ENCODE measurements at regions of chr4 and their contacts with region 1.

Region 1: GRCh38 chr4:75673027-75673958 is at the start of gene G3BP2:
- DNase-seq: peak; percentile 97
- H3K4me3 ChIP-seq: peak within 1 kb of the TSS; percentile 90
- H3K27ac ChIP-seq: peak within 1 kb of the TSS; percentile 77 to 84
- H3K4me1 ChIP-seq: peaks cover 10% of the 10 kb centered on the region
- H3K27me3 ChIP-seq: no peaks in the 10 kb centered on the region
- CTCF ChIP-seq: peak in 1 of 3 donors; percentile 10
- EP300 ChIP-seq: no peak
- POLR2A ChIP-seq: peak; percentile 81
- total RNA-seq, gene G3BP2: 56.0 to 96.5 (median 83.1) TPM

Region 2: DNA sequence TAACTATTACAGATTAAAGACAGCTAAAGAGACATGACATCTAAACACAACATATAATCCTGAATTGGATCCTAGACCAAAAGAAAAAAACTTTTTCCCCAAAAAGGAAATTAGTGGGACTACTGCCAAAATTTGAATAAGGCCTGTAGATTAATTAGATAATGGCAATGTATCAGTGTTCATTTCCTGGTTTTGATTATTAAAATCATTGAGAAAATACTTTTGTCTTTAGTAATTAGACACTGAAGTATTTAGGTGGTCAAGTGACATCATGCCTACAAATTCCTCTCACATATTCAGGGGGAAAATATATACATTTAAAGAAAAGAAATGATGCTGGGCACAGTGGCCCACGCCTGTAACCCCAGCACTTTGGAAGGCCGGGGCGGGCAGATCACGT is 40.7 kb after region 1 on chr4:
- intact Hi-C with region 1: no loop called
- DNase-seq: no peak
- H3K4me3 ChIP-seq: no peak overlapping the region
- H3K27ac ChIP-seq: no peak overlapping the region
- H3K4me1 ChIP-seq: peaks cover 7% of the 10 kb centered on the region
- H3K27me3 ChIP-seq: no peaks in the 10 kb centered on the region
- CTCF ChIP-seq: no peak
- EP300 ChIP-seq: no peak
- POLR2A ChIP-seq: no peak

Region 3: GRCh38 chr4:75724066-75724866 is 51.0 kb after region 1 on chr4 and contains the start of gene USO1:
- intact Hi-C with region 1: loop called (anchors 1 to 10 kb)
- DNase-seq: peak; percentile 99 to 100 (median 99)
- H3K4me3 ChIP-seq: peak within 1 kb of the TSS; percentile 77
- H3K27ac ChIP-seq: peak within 1 kb of the TSS; percentile 94 to 97
- H3K4me1 ChIP-seq: peaks cover 6% of the 10 kb centered on the region
- H3K27me3 ChIP-seq: no peaks in the 10 kb centered on the region
- CTCF ChIP-seq: peak; percentile 37 to 74 (median 69)
- EP300 ChIP-seq: peak; percentile 43
- POLR2A ChIP-seq: peak; percentile 96
- total RNA-seq, gene USO1: 52.2 to 91.3 (median 74.3) TPM

Measured in ovary (tissue), 10 donors.